ENCODE measurements at regions of chr17 and their contacts with region 1.

Region 1: GRCh38 chr17:37844158-37844976 is 79.8 kb upstream of the TBC1D3K start:
- DNase-seq: peak; percentile 64
- H3K4me3 ChIP-seq: no peak overlapping the region
- H3K27ac ChIP-seq: no peak overlapping the region
- H3K4me1 ChIP-seq: peaks cover 4% of the 10 kb centered on the region
- H3K27me3 ChIP-seq: no peaks in the 10 kb centered on the region
- CTCF ChIP-seq: peak; percentile 74 to 95
- POLR2A ChIP-seq: no peak

Region 2: GRCh38 chr17:37689317-37689716 is 155.1 kb before region 1 on chr17:
- CTCF ChIA-PET with region 1: no interaction called
- POLR2A ChIA-PET with region 1: no interaction called
- dilution Hi-C with region 1: no loop called
- intact Hi-C with region 1: no loop called
- DNase-seq: no peak
- H3K4me3 ChIP-seq: no peak overlapping the region
- H3K27ac ChIP-seq: no peak overlapping the region
- H3K4me1 ChIP-seq: no peaks in the 10 kb centered on the region
- H3K27me3 ChIP-seq: peaks cover 5 to 8% of the 10 kb centered on the region in 2 experiments
- CTCF ChIP-seq: no peak
- POLR2A ChIP-seq: no peak

Region 3: DNA sequence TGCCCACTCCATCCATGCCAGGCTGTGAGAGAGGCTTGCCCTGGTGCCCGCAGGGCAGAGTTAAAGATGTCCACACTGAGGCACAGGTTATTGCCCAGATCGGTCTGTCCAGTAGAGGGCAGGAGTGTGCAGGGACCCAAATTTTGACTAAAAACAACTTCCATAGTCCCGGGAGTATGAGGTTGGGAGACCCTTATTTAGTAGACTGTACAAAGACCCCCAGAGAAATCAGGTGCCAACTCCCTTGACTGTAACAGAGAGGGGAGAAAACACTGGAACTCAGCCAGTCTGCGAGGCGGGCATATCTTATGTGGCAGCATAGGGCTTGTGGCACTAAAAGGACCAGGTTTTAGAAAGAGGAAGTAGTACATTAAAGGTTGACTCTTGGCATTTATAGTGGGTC is 142.9 kb before region 1 on chr17:
- CTCF ChIA-PET with region 1: interaction called, 5 read pairs
- POLR2A ChIA-PET with region 1: no interaction called
- dilution Hi-C with region 1: no loop called
- intact Hi-C with region 1: loop called (anchors 2 kb)
- DNase-seq: peak; percentile 27
- H3K4me3 ChIP-seq: no peak overlapping the region
- H3K27ac ChIP-seq: no peak overlapping the region
- H3K4me1 ChIP-seq: no peaks in the 10 kb centered on the region
- H3K27me3 ChIP-seq: peaks cover 23 to 29% of the 10 kb centered on the region in 2 experiments
- CTCF ChIP-seq: peak; percentile 58 to 68
- POLR2A ChIP-seq: no peak

Region 4: GRCh38 chr17:37725601-37726146 is 118.7 kb before region 1 on chr17:
- CTCF ChIA-PET with region 1: no interaction called
- POLR2A ChIA-PET with region 1: no interaction called
- dilution Hi-C with region 1: no loop called
- intact Hi-C with region 1: no loop called
- DNase-seq: no peak
- H3K4me3 ChIP-seq: no peak overlapping the region
- H3K27ac ChIP-seq: no peak overlapping the region
- H3K4me1 ChIP-seq: no peaks in the 10 kb centered on the region
- H3K27me3 ChIP-seq: peaks cover 12 to 16% of the 10 kb centered on the region in 2 experiments
- CTCF ChIP-seq: no peak
- POLR2A ChIP-seq: no peak

Measured in endothelial cell of umbilical vein (primary cell).